Caco-2 (cell line): ENCODE measurements at regions of chr3 and their contacts with region 1.

Region 1: DNA sequence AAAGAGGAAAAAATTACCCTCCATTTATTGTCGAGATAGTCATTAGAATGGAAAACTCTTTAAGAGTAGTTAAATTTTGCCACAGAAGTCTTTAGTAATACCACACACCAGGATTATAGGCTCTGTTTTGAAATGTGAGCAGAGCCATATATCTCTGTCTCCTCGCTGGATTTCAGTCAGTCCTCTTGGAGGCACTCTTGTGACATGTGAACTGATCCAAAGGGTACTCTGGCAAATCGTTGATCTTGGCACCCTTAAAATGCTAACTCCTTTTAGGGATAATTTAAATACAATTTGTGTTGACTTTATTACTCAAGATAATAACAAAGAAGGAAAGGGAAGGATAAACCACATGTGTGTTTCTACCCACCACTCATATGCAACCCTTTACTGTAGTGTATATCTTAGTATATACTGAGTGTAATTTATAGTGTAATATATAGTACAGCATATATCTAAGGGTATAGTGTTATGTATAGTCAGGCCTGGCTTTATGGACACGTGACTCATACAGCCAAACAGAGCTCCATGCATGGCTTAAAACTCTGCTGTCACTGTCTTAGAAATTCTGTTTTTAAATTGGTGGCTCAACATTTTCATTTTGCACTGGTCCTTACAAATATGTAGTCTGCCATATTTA is 12.3 kb upstream of the KPNA4 start:
- DNase-seq: peak in 1 of 2 experiments; percentile 18
- H3K4me3 ChIP-seq: no peak overlapping the region
- H3K4me3 Mint-ChIP-seq: no peak overlapping the region
- H3K27ac Mint-ChIP-seq: no peak overlapping the region
- H3K4me1 ChIP-seq: no peaks in the 10 kb centered on the region
- H3K4me1 Mint-ChIP-seq: no peaks in the 10 kb centered on the region
- H3K27me3 ChIP-seq: no peaks in the 10 kb centered on the region
- H3K27me3 Mint-ChIP-seq: peaks cover 8% of the 10 kb centered on the region
- CTCF ChIP-seq: peak in 1 of 2 experiments; percentile 28

Region 2: GRCh38 chr3:160616716-160617115 is 39.0 kb after region 1 on chr3:
- CTCF ChIA-PET with region 1: interaction called, 3 read pairs
- POLR2A ChIA-PET with region 1: no interaction called
- intact Hi-C with region 1: loop called (anchors 5 kb)
- DNase-seq: no peak
- H3K4me3 ChIP-seq: no peak overlapping the region
- H3K4me3 Mint-ChIP-seq: no peak overlapping the region
- H3K27ac Mint-ChIP-seq: no peak overlapping the region
- H3K4me1 ChIP-seq: peaks cover 29% of the 10 kb centered on the region
- H3K4me1 Mint-ChIP-seq: no peaks in the 10 kb centered on the region
- H3K27me3 ChIP-seq: no peaks in the 10 kb centered on the region
- H3K27me3 Mint-ChIP-seq: peaks cover 5% of the 10 kb centered on the region
- CTCF ChIP-seq: no peak

Region 3: DNA sequence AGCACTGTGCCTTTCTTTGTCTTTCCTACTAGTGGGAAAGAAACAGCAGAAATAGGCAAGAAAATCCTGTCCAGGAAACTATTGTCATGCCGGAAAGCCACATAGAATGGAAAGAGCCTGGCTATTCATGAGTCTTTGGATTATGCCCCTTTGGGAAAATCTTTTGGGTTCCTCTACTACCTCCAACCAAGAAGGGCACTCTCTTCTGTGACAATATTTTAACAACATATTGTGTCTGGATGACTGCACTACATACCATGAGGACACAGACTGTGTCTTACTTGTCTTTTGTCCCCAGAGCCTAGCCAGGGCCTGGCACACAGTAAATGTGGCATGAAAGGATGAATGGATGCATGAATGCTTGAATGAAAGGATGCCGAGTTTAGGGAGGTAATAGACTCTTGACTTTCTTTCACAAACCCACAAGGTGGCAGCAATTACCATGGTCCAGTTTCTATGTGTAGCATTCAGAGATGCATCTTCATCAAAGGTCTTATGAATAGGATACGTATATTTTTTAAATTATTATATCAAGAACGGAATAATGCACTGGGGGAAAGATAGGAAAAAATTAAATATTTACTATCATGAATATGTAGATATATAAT is 129.6 kb after region 1 on chr3:
- CTCF ChIA-PET with region 1: no interaction called
- POLR2A ChIA-PET with region 1: no interaction called
- intact Hi-C with region 1: loop called (anchors 1 kb)
- DNase-seq: peak in 1 of 2 experiments; percentile 40
- H3K4me3 ChIP-seq: no peak overlapping the region
- H3K4me3 Mint-ChIP-seq: no peak overlapping the region
- H3K27ac Mint-ChIP-seq: no peak overlapping the region
- H3K4me1 ChIP-seq: no peaks in the 10 kb centered on the region
- H3K4me1 Mint-ChIP-seq: no peaks in the 10 kb centered on the region
- H3K27me3 ChIP-seq: no peaks in the 10 kb centered on the region
- H3K27me3 Mint-ChIP-seq: peaks cover 15% of the 10 kb centered on the region
- CTCF ChIP-seq: peak; percentile 47

Region 4: DNA sequence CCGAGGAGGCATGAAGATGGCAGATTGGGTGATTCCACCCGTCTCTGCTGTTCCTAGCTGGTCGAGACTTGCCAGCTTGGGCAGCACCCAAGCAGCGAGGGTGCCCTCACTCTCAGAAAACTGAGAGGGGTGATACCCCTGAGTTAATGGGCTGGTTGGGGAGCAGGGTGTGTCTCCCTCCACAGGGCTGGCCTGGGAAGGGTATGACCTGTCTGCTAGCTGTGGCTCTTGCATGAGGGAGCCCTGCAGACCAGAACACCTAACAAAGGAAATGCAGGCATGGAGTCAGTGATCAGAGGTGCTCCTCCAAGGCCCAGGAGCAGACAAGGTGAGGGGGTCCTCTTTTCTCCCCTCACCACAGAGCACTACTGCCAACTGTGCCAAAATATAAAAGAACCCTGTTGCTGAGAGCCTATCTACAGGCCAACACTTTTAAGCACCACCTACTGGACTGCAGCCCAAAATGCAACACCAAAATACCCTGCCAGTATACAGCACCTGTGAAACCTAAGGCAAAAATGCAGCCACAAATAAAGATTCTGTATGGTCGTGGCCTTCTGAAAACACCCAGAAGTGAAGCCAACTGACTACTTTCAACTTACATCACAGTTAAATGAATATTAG is 142.6 kb after region 1 on chr3:
- CTCF ChIA-PET with region 1: no interaction called
- POLR2A ChIA-PET with region 1: no interaction called
- intact Hi-C with region 1: loop called (anchors 1 kb)
- DNase-seq: no peak
- H3K4me3 ChIP-seq: no peak overlapping the region
- H3K4me3 Mint-ChIP-seq: no peak overlapping the region
- H3K27ac Mint-ChIP-seq: no peak overlapping the region
- H3K4me1 ChIP-seq: no peaks in the 10 kb centered on the region
- H3K4me1 Mint-ChIP-seq: no peaks in the 10 kb centered on the region
- H3K27me3 ChIP-seq: no peaks in the 10 kb centered on the region
- H3K27me3 Mint-ChIP-seq: no peaks in the 10 kb centered on the region
- CTCF ChIP-seq: peak in 1 of 2 experiments; percentile 44

Region 5: DNA sequence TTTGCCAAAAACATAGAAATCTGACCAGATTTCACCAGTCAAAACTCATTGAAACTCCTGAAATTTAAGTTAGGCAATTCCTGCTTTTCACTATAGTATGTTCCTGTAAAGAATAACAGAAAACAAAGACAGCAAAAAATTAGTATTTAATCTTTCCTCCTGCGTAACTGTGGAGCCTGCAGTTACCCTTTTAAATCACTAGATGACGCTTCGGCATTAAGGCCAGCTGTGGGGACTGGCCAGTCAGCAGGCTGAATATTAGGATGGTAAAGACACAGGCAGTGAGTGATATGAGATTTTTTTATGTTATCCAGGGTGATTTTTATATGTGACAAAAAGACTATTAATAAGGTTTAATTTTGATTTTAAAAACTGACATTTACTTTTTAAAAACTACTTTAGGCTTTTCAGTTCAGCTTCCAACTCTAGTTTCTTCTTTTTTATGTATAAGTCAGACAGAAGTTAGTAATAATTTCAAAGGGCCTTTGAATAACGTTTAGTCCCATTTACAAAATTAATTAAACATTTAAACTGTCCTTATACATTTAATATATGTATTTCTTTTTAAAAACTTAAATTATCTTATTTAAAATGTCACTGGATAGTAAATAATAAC is 343.5 kb after region 1 on chr3:
- CTCF ChIA-PET with region 1: no interaction called
- POLR2A ChIA-PET with region 1: no interaction called
- intact Hi-C with region 1: loop called (anchors 1 kb)
- DNase-seq: peak in 1 of 2 experiments; percentile 41
- H3K4me3 ChIP-seq: no peak overlapping the region
- H3K4me3 Mint-ChIP-seq: no peak overlapping the region
- H3K27ac Mint-ChIP-seq: no peak overlapping the region
- H3K4me1 ChIP-seq: no peaks in the 10 kb centered on the region
- H3K4me1 Mint-ChIP-seq: no peaks in the 10 kb centered on the region
- H3K27me3 ChIP-seq: no peaks in the 10 kb centered on the region
- H3K27me3 Mint-ChIP-seq: peaks cover 14% of the 10 kb centered on the region
- CTCF ChIP-seq: peak; percentile 80 to 89

Region 6: GRCh38 chr3:160941885-160942494 is 364.3 kb after region 1 on chr3:
- CTCF ChIA-PET with region 1: no interaction called
- POLR2A ChIA-PET with region 1: no interaction called
- intact Hi-C with region 1: loop called (anchors 1 kb)
- DNase-seq: peak; percentile 51 to 69
- H3K4me3 ChIP-seq: no peak overlapping the region
- H3K4me3 Mint-ChIP-seq: no peak overlapping the region
- H3K27ac Mint-ChIP-seq: no peak overlapping the region
- H3K4me1 ChIP-seq: no peaks in the 10 kb centered on the region
- H3K4me1 Mint-ChIP-seq: no peaks in the 10 kb centered on the region
- H3K27me3 ChIP-seq: no peaks in the 10 kb centered on the region
- H3K27me3 Mint-ChIP-seq: no peaks in the 10 kb centered on the region
- CTCF ChIP-seq: peak; percentile 60 to 74